Activated T-helper 1 cell treated with anti-CD3 and anti-CD28 coated beads, Interleukin-12 subunit alpha, Interleukin-12 subunit beta, Interleukin-2, Interleukin-4 antibody, amounts not matched to agents 30 ng/mL and 10 ng/mL and 1 ng/mL, durations not matched to agents 14 hours and 24 hours and 36 hours (primary cell): ENCODE measurements at regions of chr2 and their contacts with region 1.

Region 1: GRCh38 chr2:102082571-102083392 is 59.8 kb upstream of the IL1R1 start:
- DNase-seq: peak; percentile 41
- H3K4me3 Mint-ChIP-seq: peak overlapping the region; percentile 64
- H3K27ac Mint-ChIP-seq: peak overlapping the region; percentile 89
- H3K4me1 Mint-ChIP-seq: peaks cover 37% of the 10 kb centered on the region
- H3K27me3 Mint-ChIP-seq: peaks cover 6% of the 10 kb centered on the region

Region 2: DNA sequence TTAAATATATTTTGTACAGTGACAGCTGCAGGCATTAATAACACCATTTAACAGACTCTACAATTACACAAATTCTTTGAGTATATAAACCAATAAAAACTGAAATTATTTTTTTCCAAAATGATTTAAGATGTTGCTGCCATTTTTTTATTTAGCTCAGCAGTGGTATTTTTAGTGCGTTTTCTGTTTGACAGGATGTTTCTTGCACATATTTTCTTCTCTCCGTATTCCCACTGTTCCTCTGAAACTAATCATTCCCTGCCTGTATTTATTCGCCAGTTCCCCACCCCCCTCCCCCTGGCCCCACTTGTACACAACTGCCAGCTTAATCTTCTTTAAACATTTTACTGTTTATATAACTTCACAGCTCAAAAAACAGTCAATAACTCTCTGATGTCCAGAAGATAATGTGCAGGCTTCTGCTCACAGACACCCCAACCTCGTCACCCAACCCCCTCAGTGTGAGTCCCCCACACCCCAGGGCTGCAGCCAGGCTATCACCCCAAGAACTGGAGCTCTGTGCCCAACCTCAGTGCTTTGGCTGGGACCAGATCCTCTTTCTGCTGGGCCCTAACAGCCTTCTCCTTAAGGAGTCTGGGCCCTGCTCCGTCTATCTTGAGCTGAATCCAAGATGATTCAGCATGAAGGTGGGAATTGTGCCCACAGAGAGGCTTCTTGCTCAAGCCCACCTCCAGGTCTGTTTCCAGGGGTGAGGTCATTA is 426.9 kb before region 1 on chr2:
- intact Hi-C with region 1: loop called (anchors 2 kb)
- DNase-seq: no peak
- H3K4me3 Mint-ChIP-seq: no peak overlapping the region
- H3K27ac Mint-ChIP-seq: no peak overlapping the region
- H3K4me1 Mint-ChIP-seq: peaks cover 18% of the 10 kb centered on the region
- H3K27me3 Mint-ChIP-seq: no peaks in the 10 kb centered on the region

Region 3: DNA sequence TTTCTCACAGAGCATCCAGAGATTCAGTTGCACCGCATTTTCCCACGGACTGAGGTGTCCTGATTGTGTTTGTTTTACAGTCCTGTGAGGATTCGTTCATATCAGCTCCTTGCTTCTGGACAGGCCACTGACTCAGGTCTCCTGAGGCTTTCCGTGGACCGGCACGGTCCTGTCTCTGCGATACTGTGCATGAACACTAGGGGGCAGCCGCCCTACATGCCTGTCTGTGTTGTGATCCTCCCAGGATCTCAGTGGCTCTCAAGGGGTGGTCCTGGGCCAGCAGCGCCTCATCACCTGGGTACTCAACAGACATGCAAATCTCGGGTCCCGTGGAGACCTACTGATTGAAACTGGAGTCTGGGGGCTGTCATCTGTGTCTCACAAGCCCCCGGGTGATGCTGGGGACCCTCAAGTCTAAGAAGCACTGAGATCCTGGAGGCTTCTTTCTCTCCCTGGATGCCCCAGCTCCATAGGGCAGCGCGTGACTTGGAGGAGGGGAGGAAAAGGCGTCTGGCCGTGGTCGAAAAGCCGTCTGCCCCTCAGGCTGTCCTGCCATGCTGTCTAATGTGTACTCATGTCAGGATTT is 62.1 kb before region 1 on chr2:
- intact Hi-C with region 1: loop called (anchors 2 kb)
- DNase-seq: peak; percentile 70
- H3K4me3 Mint-ChIP-seq: no peak overlapping the region
- H3K27ac Mint-ChIP-seq: no peak overlapping the region
- H3K4me1 Mint-ChIP-seq: peaks cover 18% of the 10 kb centered on the region
- H3K27me3 Mint-ChIP-seq: peaks cover 13% of the 10 kb centered on the region

Region 4: DNA sequence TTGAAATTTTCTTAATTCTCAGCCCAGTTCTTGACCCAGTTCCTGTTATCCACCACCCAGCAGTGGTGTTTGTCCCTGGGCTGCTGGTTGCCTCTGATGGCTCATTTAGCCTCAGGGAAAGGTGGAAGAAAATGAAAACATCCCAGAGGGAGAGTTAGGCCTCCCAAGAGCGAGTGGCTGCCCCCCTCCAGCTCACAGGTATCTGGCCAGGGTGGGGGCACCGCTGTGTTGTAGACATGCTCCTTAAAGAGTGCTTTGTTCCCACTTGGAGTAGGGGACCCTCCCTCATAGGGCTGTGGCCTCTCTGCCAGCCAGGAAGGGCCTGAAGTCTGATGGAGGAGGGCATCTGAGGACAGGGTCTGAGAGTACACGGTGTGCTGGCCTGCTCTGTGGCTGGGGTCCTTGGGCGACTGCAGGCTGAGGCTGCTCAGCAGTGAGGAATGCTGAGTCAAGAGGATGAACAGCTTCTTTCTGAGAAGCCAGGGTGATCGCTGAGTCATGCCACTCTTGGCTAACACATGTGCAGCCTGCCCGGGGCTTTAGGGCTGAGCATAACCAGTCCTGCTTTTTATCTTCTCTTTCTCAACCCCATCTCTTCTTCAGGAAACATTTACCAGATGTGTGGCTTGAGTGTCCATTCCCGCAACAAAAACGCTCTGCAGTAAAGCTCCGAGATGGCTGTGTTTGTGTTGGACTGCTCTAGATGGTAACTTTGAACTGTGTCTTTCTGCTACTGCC is 18.7 kb before region 1 on chr2:
- intact Hi-C with region 1: loop called (anchors 1 kb)
- DNase-seq: peak; percentile 17
- H3K4me3 Mint-ChIP-seq: no peak overlapping the region
- H3K27ac Mint-ChIP-seq: no peak overlapping the region
- H3K4me1 Mint-ChIP-seq: peaks cover 31% of the 10 kb centered on the region
- H3K27me3 Mint-ChIP-seq: peaks cover 7% of the 10 kb centered on the region

Region 5: DNA sequence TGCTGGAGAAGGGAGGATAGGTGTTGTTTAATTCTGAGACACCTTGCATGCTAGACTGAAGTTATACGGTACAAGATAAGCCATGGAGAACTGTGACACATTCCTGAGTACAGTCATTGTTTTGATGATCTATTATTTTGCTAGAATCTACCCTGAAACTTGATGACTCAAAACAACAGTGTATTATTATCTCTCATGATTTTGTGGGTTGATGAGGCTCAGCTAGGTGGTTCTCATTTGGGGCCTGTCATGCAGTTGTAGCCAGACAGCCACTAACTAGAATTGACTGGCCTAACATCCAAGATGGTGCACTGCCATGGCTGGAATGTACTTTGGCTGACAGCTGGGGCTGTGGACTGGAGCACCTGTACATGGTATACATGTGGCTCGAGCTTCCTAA is 54.4 kb after region 1 on chr2:
- intact Hi-C with region 1: loop called (anchors 1 kb)
- DNase-seq: no peak
- H3K4me3 Mint-ChIP-seq: no peak overlapping the region
- H3K27ac Mint-ChIP-seq: peak overlapping the region; percentile 15
- H3K4me1 Mint-ChIP-seq: peaks cover 33% of the 10 kb centered on the region
- H3K27me3 Mint-ChIP-seq: peaks cover 21% of the 10 kb centered on the region

Region 6: DNA sequence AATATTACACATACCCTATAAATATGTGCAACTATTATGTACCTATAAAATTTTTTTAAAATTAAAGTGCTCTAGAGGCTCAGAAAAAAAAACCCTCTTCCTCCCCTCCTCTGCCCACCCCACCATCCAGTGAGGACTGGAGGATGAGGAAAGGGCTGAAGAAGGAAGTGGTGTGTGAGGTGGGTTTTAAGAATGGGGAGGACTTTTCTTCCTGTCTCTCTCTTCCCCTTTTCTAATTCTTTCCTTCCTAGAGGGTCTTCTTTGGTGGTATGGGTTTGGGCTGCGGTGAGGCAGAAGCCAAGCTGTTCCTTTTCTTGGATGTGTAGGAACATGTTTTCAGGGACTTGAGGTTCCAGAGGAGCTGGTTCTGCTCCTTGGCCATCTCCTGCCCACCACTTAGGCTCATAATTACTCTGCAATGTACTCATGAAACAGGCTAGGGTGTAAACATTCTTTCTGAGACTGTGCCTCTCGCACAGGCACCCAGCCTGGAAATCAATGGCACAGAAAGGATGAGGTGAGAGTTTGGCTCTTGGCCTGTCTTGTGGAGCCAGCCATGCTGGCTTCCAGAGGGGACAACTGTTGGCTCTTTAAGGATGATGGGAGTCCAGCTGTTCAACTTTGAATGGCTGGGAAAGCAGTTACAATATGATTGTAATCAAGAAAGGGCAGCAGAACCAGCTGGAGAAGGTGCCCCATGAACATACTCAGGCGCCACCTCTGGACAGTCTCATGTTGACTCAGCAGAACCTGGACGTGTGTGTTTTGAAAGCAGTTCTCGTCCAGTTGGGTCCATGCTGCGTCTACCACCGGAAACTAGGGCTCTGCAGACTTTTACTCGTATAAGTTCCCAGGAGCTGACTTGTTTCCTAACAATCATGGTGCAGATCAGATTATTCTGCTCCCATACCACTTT is 142.3 kb after region 1 on chr2:
- intact Hi-C with region 1: no loop called
- DNase-seq: no peak
- H3K4me3 Mint-ChIP-seq: no peak overlapping the region
- H3K27ac Mint-ChIP-seq: peak overlapping the region; percentile 36
- H3K4me1 Mint-ChIP-seq: peaks cover 55% of the 10 kb centered on the region
- H3K27me3 Mint-ChIP-seq: peaks cover 2% of the 10 kb centered on the region

Region 7: GRCh38 chr2:102301867-102302362 is 219.1 kb after region 1 on chr2:
- intact Hi-C with region 1: loop called (anchors 1 kb)
- DNase-seq: peak; percentile 47
- H3K4me3 Mint-ChIP-seq: peak overlapping the region; percentile 43
- H3K27ac Mint-ChIP-seq: peak overlapping the region; percentile 87
- H3K4me1 Mint-ChIP-seq: peaks cover 67% of the 10 kb centered on the region
- H3K27me3 Mint-ChIP-seq: peaks cover 2% of the 10 kb centered on the region

Region 8: GRCh38 chr2:102418421-102418961 is 335.7 kb after region 1 on chr2:
- intact Hi-C with region 1: loop called (anchors 2 kb)
- DNase-seq: peak; percentile 34
- H3K4me3 Mint-ChIP-seq: peak overlapping the region; percentile 90
- H3K27ac Mint-ChIP-seq: peak overlapping the region; percentile 94
- H3K4me1 Mint-ChIP-seq: peaks cover 68% of the 10 kb centered on the region
- H3K27me3 Mint-ChIP-seq: no peaks in the 10 kb centered on the region